ENCODE measurements at regions of chr5 and their contacts with region 1.

Region 1: DNA sequence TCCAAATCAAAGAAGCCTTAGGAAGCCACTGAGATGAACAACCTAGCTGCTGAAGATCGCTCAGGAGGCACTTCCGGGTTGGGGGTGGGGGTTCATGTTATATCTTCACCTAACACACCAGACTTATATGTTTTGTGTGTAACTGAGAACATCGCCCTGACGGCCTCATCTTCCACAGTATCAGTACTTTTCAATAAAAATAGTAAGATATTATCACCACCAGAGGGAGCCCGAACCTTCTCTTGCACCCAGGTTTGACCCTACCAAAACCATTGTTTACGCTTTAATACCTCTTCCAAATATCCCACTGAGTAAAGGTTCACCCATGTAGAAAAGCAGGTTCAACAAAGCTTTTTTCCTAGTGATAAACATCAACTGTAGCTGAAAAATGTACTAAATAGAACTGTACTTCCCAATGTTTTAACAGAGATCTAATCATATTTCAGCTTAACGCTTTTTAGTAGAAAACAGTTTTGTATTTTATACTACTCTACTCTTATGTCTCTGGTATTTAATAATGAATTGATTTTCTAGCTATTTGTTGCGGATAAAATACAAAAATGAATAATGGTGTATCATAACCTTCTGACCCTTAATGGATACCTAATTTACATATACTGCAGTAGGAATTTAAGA is 244.0 kb downstream of the EPB41L4A start:
- DNase-seq: no peak
- ATAC-seq: peak; percentile 56

Region 2: DNA sequence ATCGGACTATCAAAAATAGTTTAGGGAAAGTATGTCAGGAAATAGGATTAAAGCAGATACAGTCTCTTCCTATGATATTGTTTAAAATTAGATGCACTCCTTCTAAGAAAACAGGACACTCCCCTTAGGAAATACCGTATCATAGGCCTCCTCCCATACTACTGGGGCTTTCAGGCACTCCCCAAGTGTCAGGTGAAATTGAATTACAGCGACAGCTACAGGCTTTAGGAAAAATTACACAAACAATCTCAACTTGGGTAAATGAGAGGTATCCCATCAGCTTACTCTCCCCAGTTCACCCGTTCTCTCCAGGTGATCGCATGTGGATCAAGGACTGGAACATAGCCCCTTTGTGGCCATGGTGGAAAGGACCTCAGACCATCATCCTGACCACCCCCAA is 354.4 kb after region 1 on chr5:
- intact Hi-C with region 1: loop called (anchors 2 kb)
- DNase-seq: no peak
- ATAC-seq: no peak

Measured in Right ventricle myocardium inferior (tissue), 1 donor.